ENCODE measurements at regions of chr22 and their contacts with region 1.

Region 1: GRCh38 chr22:37316875-37317371 is 34.6 kb downstream of the CYTH4 start:
- DNase-seq: no peak
- ATAC-seq: peak; percentile 83
- H3K4me3 ChIP-seq: no peak overlapping the region
- H3K27ac ChIP-seq: no peak overlapping the region
- H3K4me1 ChIP-seq: peaks cover 21% of the 10 kb centered on the region
- H3K27me3 ChIP-seq: peaks cover 0 to 1% of the 10 kb centered on the region in 2 experiments; a peak in 1 of 4 replicates
- CTCF ChIP-seq: peak; percentile 91 to 97 (median 96); a peak in 5 of 6 replicates
- EP300 ChIP-seq: no peak
- POLR2A ChIP-seq: no peak
- RAD21 ChIP-seq: peak; percentile 99

Region 2: DNA sequence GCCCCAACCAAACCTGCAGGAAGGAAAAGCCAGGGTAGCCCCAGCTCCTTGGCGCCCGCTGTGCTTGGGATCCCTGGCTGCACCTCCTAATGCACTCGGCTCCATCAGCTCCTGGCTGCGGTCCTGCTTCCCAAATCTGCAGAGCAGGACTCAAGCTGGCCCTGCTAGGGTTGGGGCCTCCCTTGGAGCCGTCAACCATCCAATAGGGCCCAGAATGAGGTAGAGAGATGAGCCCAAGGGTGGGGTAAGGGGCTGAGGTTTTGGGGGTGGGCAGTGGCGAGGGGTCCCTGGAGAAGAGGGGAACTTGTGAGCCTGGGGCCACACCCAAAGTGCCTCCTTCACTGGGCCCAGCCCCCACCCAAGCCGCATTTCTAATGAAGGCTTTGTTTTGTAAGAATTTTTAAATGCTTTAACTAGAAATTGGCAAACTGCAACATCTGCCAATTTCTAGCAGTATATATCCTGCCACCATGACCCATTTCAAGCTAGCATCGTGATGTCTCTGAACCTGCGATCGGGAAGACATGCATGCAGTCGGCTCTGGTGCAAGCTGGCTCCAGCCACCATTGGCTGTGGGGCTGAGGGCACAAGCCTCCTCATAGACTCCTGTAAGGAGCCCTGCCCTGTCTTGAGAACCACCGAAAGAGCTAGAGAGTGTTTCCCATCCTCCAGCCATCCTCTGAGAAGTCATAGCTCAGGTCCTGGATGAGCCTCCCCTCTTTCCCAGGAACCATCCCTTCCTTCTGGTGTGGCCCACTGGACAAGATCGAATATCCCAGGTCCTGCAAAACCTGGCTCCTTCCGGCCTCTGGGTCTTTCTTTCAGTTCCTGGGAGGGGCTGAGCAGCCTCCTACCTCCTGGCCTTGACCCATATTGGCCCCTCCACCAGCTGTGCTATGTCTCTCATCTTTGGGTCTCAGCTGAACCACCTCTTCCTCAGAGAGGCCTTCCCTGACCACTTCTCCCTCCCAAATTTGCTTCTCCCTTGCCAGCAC is 144.4 kb before region 1 on chr22:
- CTCF ChIA-PET with region 1: no interaction called
- POLR2A ChIA-PET with region 1: no interaction called
- RAD21 ChIA-PET with region 1: no interaction called
- SMC1A ChIA-PET with region 1: no interaction called
- in situ Hi-C with region 1: no loop called
- intact Hi-C with region 1: no loop called
- DNase-seq: no peak
- ATAC-seq: no peak
- H3K4me3 ChIP-seq: no peak overlapping the region
- H3K27ac ChIP-seq: no peak overlapping the region
- H3K4me1 ChIP-seq: peaks cover 15% of the 10 kb centered on the region
- H3K27me3 ChIP-seq: no peaks in the 10 kb centered on the region; a peak in 1 of 4 replicates
- CTCF ChIP-seq: no peak
- EP300 ChIP-seq: no peak
- POLR2A ChIP-seq: no peak
- RAD21 ChIP-seq: no peak

Region 3: DNA sequence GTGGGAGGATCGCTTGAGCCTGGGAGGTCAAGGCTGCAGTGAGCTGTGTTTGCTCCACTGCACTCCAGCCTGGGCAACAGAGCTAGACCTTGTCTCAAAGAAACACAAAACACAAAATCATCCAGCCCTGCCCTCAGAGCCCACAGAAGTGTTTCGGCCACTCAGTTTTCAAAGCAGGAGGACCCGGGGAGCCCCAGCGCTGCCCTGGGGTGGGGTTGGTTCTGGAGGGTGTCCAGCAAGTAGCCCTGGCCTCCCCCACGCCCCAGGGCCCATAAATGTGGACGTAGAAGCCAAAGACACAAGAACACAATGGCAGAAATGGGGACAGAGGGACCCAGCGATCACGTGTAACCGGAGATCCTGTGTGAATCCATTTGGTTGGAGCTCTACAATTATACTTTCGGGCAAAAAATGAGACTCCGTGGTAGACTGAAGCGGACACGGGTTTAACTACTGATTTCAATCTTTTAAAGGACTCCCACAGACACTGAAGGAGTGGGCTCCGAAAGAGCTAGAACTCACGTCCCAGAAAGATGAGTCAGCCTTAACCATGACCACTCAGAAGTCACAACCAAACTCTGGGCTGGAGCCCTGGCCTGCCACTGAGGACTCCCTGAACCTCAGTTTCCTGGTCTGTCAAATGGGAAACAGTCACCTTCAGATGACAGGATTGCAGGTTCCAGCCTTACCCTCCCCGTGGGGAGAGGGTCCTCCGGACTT is 43.6 kb before region 1 on chr22:
- CTCF ChIA-PET with region 1: interaction called, 181 read pairs
- POLR2A ChIA-PET with region 1: no interaction called
- RAD21 ChIA-PET with region 1: interaction called, 26 read pairs
- SMC1A ChIA-PET with region 1: interaction called, 65 read pairs
- in situ Hi-C with region 1: no loop called
- intact Hi-C with region 1: no loop called
- DNase-seq: no peak
- ATAC-seq: peak; percentile 80
- H3K4me3 ChIP-seq: no peak overlapping the region
- H3K27ac ChIP-seq: peak overlapping the region; percentile 6; the same call in 1 of the 2 replicates
- H3K4me1 ChIP-seq: peaks cover 25% of the 10 kb centered on the region
- H3K27me3 ChIP-seq: no peaks in the 10 kb centered on the region
- CTCF ChIP-seq: no peak
- EP300 ChIP-seq: no peak
- POLR2A ChIP-seq: no peak
- RAD21 ChIP-seq: no peak

Region 4: DNA sequence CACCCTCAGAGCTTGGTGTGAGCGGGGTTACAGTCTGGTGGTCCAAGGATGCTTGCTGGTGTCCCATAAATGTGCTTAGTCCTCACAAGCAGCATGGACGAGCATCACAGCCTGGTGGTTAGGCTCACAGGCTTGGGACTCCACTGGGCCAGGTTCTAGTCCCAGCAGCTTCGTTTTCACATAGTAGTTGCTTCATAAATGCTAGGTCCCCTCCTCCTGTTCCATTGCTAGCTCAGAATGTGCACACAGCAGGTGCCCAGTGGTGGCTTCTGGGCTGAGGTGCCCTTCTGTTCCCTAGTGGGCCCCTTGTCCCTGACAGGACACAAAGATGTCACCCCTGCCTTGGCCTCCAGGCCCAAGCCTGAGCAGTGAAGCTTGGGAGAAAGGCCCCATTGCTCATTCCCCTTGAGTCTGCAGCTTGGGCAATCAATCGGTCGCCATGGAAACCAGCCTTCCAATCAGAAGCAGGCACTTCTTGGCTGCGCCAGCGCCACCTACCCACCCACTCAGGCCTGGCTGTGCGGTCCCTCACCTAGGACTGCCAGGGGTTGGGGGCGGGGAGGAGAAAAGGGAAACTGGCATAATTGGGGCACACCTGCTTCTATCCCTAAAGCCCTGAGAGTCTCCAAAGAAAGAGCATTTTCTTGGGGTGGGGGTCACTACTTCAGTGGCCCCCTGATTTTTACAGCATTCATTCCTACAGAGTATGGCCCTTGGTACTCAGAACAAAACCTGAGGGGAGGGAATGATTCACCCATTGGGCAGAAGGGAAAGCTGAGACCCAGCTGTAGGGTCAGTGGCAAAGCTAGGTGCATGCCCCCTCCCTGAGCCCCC is 13.5 kb after region 1 on chr22:
- CTCF ChIA-PET with region 1: interaction called, 23 read pairs
- POLR2A ChIA-PET with region 1: no interaction called
- RAD21 ChIA-PET with region 1: interaction called, 13 read pairs
- SMC1A ChIA-PET with region 1: interaction called, 12 read pairs
- in situ Hi-C with region 1: no loop called
- intact Hi-C with region 1: no loop called
- DNase-seq: no peak
- ATAC-seq: peak; percentile 90
- H3K4me3 ChIP-seq: no peak overlapping the region
- H3K27ac ChIP-seq: no peak overlapping the region
- H3K4me1 ChIP-seq: no peaks in the 10 kb centered on the region; the same call in 1 of the 2 replicates
- H3K27me3 ChIP-seq: peaks cover 8 to 9% of the 10 kb centered on the region in 2 experiments
- CTCF ChIP-seq: peak; percentile 24 to 34 (median 26); a peak in 4 of 6 replicates
- EP300 ChIP-seq: no peak
- POLR2A ChIP-seq: no peak
- RAD21 ChIP-seq: no peak

Region 5: GRCh38 chr22:37442537-37442936 is 125.6 kb after region 1 on chr22:
- CTCF ChIA-PET with region 1: interaction called, 5 read pairs
- POLR2A ChIA-PET with region 1: no interaction called
- RAD21 ChIA-PET with region 1: interaction called, 4 read pairs
- SMC1A ChIA-PET with region 1: no interaction called
- in situ Hi-C with region 1: no loop called
- intact Hi-C with region 1: loop called (anchors 5 kb)
- DNase-seq: no peak
- ATAC-seq: peak; percentile 73
- H3K4me3 ChIP-seq: no peak overlapping the region
- H3K27ac ChIP-seq: no peak overlapping the region
- H3K4me1 ChIP-seq: no peaks in the 10 kb centered on the region
- H3K27me3 ChIP-seq: no peaks in the 10 kb centered on the region; a peak in 3 of 4 replicates
- CTCF ChIP-seq: no peak
- EP300 ChIP-seq: no peak
- POLR2A ChIP-seq: no peak
- RAD21 ChIP-seq: no peak

Region 6: GRCh38 chr22:37472418-37473006 is 155.6 kb after region 1 on chr22:
- CTCF ChIA-PET with region 1: interaction called, 18 read pairs
- POLR2A ChIA-PET with region 1: no interaction called
- RAD21 ChIA-PET with region 1: no interaction called
- SMC1A ChIA-PET with region 1: no interaction called
- in situ Hi-C with region 1: no loop called
- intact Hi-C with region 1: no loop called
- DNase-seq: no peak
- ATAC-seq: peak; percentile 74
- H3K4me3 ChIP-seq: no peak overlapping the region
- H3K27ac ChIP-seq: no peak overlapping the region
- H3K4me1 ChIP-seq: no peaks in the 10 kb centered on the region
- H3K27me3 ChIP-seq: no peaks in the 10 kb centered on the region
- CTCF ChIP-seq: peak; percentile 52 to 76 (median 60)
- EP300 ChIP-seq: no peak
- POLR2A ChIP-seq: no peak
- RAD21 ChIP-seq: 0 out of 2 replicates have a peak, but pooled peaks have one; percentile 23